Esophagus muscularis mucosa (tissue), 4 donors: ENCODE measurements at regions of chr20 and their contacts with region 1.

Region 1: DNA sequence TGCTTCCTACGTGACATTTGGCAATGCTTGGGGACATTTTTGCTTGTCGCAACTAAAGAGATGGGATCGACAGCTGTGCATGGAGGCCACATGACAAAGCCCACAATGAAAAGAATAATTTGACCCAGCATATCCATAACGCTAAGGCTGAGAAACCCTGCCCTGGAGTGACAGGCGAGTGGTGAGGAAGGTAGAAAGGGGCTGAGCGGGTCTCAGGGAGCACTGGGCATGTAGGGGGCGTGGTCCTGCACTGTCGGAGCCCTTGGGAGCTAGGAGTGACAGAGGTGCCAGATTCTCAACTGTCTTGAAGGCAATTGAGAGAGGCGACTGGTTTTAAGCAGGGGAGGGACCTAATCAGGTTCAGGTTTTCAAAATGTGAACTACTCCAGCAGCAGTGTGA is 13.6 kb downstream of the GGTLC1 start:
- DNase-seq: peak; percentile 74
- H3K4me3 ChIP-seq: no peak overlapping the region
- H3K27ac ChIP-seq: no peak overlapping the region
- H3K4me1 ChIP-seq: no peaks in the 10 kb centered on the region
- H3K27me3 ChIP-seq: no peaks in the 10 kb centered on the region
- CTCF ChIP-seq: no peak
- EP300 ChIP-seq: no peak
- POLR2A ChIP-seq: no peak

Region 2: DNA sequence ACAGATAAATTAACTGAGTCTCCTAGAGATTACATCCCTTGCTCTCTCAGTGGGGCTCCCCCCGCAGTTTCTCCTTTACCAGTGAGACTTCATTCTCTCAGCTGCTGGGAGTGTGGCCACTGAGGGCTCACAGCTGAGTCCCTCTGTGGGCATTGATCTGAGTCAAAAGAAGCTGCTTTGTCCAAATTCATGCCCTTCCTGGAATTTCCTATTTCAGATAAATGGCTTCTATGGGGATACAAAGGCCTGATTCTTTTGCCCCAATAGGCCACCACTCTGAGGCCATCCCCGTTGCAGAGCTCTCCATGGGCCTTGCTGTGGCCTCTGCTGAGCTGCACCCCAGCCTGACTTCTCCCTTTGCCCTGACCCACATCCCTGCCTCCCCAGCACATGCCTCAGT is 105.4 kb before region 1 on chr20:
- intact Hi-C with region 1: no loop called
- DNase-seq: no peak
- H3K4me3 ChIP-seq: no peak overlapping the region
- H3K27ac ChIP-seq: no peak overlapping the region
- H3K4me1 ChIP-seq: peaks cover 0 to 43% (median 36%) of the 10 kb centered on the region in 4 donors
- H3K27me3 ChIP-seq: no peaks in the 10 kb centered on the region
- CTCF ChIP-seq: no peak
- EP300 ChIP-seq: no peak
- POLR2A ChIP-seq: no peak

Region 3: GRCh38 chr20:23955896-23956295 is 19.1 kb before region 1 on chr20:
- intact Hi-C with region 1: loop called (anchors 2 kb)
- DNase-seq: peak; percentile 50
- H3K4me3 ChIP-seq: no peak overlapping the region
- H3K27ac ChIP-seq: no peak overlapping the region
- H3K4me1 ChIP-seq: no peaks in the 10 kb centered on the region
- H3K27me3 ChIP-seq: peaks cover 0 to 12% (median 0%) of the 10 kb centered on the region in 4 donors
- CTCF ChIP-seq: no peak
- EP300 ChIP-seq: no peak
- POLR2A ChIP-seq: no peak

Region 4: DNA sequence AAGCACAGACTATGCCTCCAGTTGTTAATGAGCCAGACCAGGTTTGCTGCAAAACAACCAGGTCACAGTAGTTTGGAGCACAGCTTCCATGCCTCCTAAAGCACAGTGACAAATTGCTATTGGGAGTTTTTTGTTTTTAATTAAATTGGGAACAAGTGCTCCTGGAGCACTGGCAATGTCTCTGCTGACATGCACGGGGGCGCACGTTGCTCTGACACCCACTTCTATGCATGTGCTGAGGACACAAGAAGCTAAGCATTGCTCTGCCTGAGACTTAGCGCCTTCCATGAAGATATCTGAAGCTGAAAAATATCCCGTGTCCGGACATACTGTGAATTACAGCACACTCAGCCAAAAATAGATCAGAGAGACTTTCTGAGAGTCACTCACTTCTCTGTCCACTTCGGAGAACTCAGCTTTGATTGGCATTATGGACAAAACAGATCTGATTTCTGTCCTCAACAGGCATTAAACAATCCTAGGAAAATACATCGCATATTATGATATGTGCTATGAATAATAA is 32.2 kb after region 1 on chr20:
- intact Hi-C with region 1: no loop called
- DNase-seq: no peak
- H3K4me3 ChIP-seq: no peak overlapping the region
- H3K27ac ChIP-seq: no peak overlapping the region
- H3K4me1 ChIP-seq: no peaks in the 10 kb centered on the region
- H3K27me3 ChIP-seq: peaks cover 0 to 9% (median 0%) of the 10 kb centered on the region in 4 donors
- CTCF ChIP-seq: no peak
- EP300 ChIP-seq: no peak
- POLR2A ChIP-seq: no peak

Region 5: DNA sequence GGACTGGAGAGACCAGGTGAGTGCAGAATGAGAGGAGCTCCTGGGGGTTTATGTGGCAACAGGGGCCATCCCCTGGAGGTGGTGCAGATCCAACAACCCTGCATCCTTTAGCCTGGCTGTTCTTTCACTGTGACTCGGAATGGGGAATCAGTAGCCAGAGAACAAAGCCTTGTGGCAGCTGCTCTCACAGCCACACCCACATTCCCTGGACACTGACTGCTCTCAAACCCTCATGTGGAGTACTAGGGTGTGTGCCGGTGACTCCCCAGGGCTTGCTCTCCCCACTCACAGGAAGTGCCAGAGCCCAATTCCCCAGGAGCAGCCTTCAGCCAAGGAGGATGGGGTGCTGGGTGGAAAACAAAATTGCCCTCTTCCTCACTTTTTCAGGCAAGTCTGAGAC is 43.8 kb after region 1 on chr20:
- intact Hi-C with region 1: no loop called
- DNase-seq: no peak
- H3K4me3 ChIP-seq: no peak overlapping the region
- H3K27ac ChIP-seq: no peak overlapping the region
- H3K4me1 ChIP-seq: no peaks in the 10 kb centered on the region
- H3K27me3 ChIP-seq: peaks cover 0 to 32% (median 0%) of the 10 kb centered on the region in 4 donors
- CTCF ChIP-seq: no peak
- EP300 ChIP-seq: no peak
- POLR2A ChIP-seq: no peak

Region 6: GRCh38 chr20:24034820-24035219 is 59.9 kb after region 1 on chr20:
- intact Hi-C with region 1: no loop called
- DNase-seq: no peak
- H3K4me3 ChIP-seq: no peak overlapping the region
- H3K27ac ChIP-seq: no peak overlapping the region
- H3K4me1 ChIP-seq: no peaks in the 10 kb centered on the region
- H3K27me3 ChIP-seq: no peaks in the 10 kb centered on the region
- CTCF ChIP-seq: no peak
- EP300 ChIP-seq: no peak
- POLR2A ChIP-seq: no peak